AG04449 (cell line): ENCODE measurements at regions of chr15 and their contacts with region 1.

Region 1: GRCh38 chr15:58770857-58771620 is at the start of gene MINDY2:
- DNase-seq: peak; percentile 90
- H3K4me3 ChIP-seq: peak within 1 kb of the TSS; percentile 82
- CTCF ChIP-seq: peak; percentile 51

Region 2: GRCh38 chr15:58212909-58213526 is 558.0 kb before region 1 on chr15:
- CTCF ChIA-PET with region 1: interaction called, 12 read pairs
- POLR2A ChIA-PET with region 1: no interaction called
- DNase-seq: no peak
- H3K4me3 ChIP-seq: no peak overlapping the region
- CTCF ChIP-seq: peak; percentile 52

Region 3: GRCh38 chr15:58269455-58270414 is 501.3 kb before region 1 on chr15:
- CTCF ChIA-PET with region 1: interaction called, 11 read pairs
- POLR2A ChIA-PET with region 1: no interaction called
- DNase-seq: no peak
- H3K4me3 ChIP-seq: no peak overlapping the region
- CTCF ChIP-seq: peak; percentile 69

Region 4: DNA sequence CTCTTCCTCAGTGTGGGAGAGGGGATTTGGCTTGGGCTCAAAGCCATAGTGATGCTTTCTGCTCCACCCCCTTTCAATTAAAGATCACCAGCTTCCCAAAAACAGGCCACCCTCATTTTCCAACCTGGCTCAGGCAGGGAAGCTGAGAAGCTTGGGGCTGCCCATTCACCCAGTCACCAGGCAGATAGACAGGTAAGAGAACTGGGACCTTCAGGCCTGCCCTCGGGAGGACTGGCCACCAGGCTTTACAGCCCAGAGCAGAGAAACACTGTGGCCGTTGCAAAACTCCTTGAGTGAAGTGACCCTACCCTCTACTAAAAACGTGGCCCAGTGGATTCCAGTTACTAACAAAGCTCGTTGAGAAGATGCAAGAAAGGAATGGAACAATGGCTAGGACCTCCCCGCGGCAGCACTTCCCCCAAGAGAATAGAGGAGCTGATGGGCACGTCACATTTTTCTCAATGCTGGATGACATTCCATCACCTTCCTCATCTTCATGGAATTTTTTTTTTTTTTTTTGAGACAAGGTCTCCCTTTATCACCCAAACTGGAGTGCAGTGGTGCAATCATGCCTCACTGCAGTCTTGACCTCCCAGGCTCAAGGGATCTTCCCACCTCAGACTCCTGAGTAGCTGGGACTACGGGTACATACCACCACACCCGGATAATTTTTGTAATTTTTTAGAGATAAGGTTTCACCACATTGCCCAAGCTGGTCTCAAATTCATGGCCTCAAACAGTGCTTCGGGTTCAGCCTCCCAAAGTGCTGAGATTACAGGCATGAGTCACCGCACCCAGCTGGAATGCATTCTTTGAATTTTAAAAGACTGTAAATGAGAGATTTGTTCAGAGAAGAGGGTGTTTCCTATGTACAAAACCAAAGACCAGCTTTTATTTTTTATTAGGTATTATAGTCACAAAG is 301.3 kb before region 1 on chr15:
- CTCF ChIA-PET with region 1: interaction called, 3 read pairs
- POLR2A ChIA-PET with region 1: interaction called, 15 read pairs
- DNase-seq: peak; percentile 92
- H3K4me3 ChIP-seq: no peak overlapping the region
- CTCF ChIP-seq: no peak

Region 5: DNA sequence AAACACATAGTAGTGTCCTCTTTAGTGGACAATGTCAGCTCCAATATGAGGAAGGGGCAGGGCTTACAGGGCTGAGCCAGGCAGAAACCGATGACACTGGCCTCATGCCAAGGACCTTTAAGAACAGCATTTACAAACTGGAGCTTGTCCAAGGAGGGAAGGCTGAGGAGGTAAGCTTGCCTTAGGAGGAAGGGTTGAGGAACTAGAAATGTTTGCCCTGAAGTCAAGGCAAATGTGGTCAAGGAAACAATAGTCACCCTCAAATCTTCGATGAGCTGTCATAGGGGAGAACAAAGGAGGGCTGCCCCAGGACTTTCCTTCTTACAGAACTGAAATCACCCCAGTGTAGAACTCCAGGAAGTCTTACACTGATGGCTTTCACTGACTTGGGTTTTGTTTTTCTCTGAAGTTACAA is 202.9 kb before region 1 on chr15:
- CTCF ChIA-PET with region 1: no interaction called
- POLR2A ChIA-PET with region 1: no interaction called
- DNase-seq: no peak
- H3K4me3 ChIP-seq: no peak overlapping the region
- CTCF ChIP-seq: no peak

Region 6: DNA sequence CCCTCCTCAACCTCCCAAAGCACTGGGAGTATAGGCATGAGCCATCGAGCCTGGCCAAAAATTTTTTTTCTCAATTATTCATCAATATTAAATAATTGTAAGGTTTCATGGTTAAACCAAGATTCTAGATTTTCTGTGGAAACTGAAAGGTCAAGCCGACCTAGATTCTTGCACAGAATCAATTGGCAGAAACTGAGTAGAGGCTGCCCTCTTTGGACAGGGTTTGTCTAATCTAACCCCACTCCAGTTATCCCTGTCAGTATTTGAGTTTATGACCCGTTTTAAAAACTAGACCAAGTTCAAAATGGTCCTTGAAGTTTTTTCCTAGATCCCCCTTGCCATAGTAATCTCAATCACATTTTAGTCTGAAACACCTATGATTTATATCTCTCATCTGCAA is 12.9 kb before region 1 on chr15:
- CTCF ChIA-PET with region 1: interaction called, 17 read pairs
- POLR2A ChIA-PET with region 1: interaction called, 3 read pairs
- DNase-seq: no peak
- H3K4me3 ChIP-seq: no peak overlapping the region
- CTCF ChIP-seq: peak; percentile 18

Region 7: GRCh38 chr15:58889363-58889762 is 118.3 kb after region 1 on chr15:
- CTCF ChIA-PET with region 1: no interaction called
- POLR2A ChIA-PET with region 1: no interaction called
- DNase-seq: no peak
- H3K4me3 ChIP-seq: no peak overlapping the region
- CTCF ChIP-seq: no peak

Region 8: DNA sequence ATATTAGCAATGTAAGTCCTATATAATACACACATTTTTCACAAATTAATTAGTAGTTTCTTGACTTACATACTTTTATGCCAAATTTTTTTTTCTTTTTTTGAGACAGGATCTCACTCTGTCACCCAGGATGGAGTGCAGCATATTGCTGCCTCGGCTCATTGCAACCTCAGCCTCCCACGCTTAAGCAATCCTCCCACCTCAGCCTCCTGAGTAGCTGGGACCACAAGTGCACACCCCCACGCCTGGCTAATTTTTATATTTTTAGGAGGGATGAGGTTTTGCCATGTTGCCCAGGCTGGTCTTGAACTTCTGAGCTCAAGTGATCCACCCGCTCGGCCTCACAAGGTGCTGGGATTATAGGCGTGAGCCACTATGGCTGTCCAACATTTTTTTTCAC is 271.0 kb after region 1 on chr15:
- CTCF ChIA-PET with region 1: no interaction called
- POLR2A ChIA-PET with region 1: no interaction called
- DNase-seq: no peak
- H3K4me3 ChIP-seq: no peak overlapping the region
- CTCF ChIP-seq: no peak

Region 9: GRCh38 chr15:59099162-59099685 is 328.2 kb after region 1 on chr15:
- CTCF ChIA-PET with region 1: no interaction called
- POLR2A ChIA-PET with region 1: no interaction called
- DNase-seq: no peak
- H3K4me3 ChIP-seq: no peak overlapping the region
- CTCF ChIP-seq: no peak